AG04450 (cell line): ENCODE measurements at regions of chr10 and their contacts with region 1.

Region 1: GRCh38 chr10:84478151-84478550 is 149.8 kb downstream of the CCSER2 start:
- DNase-seq: no peak
- H3K4me3 ChIP-seq: no peak overlapping the region
- H3K27ac ChIP-seq: no peak overlapping the region
- H3K27me3 ChIP-seq: no peaks in the 10 kb centered on the region
- CTCF ChIP-seq: no peak

Region 2: DNA sequence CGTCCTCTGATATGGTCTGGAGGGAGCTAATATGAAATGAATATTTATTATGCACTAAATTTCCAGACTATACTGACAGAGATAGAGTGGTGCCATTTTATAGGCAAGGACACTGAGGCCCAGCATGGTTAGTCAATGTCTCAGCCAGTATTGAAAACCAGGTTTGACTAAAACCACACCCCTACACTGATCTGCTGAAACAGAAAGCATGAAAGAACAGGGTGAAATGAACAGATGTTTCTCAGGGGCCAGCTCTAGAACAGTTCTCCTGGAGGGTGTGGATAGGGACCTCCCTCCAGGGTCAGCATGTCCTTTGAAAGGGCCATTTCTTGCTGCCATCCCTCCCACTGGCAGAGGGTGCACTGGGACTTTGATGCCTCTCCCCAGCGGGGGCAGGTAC is 1188.0 kb after region 1 on chr10:
- CTCF ChIA-PET with region 1: no interaction called
- POLR2A ChIA-PET with region 1: interaction called, 17 read pairs
- DNase-seq: no peak
- H3K4me3 ChIP-seq: no peak overlapping the region
- H3K27ac ChIP-seq: no peak overlapping the region
- H3K27me3 ChIP-seq: no peaks in the 10 kb centered on the region
- CTCF ChIP-seq: no peak